Posterior vena cava (tissue), 2 donors: ENCODE measurements at regions of chr2 and their contacts with region 1.

Region 1: DNA sequence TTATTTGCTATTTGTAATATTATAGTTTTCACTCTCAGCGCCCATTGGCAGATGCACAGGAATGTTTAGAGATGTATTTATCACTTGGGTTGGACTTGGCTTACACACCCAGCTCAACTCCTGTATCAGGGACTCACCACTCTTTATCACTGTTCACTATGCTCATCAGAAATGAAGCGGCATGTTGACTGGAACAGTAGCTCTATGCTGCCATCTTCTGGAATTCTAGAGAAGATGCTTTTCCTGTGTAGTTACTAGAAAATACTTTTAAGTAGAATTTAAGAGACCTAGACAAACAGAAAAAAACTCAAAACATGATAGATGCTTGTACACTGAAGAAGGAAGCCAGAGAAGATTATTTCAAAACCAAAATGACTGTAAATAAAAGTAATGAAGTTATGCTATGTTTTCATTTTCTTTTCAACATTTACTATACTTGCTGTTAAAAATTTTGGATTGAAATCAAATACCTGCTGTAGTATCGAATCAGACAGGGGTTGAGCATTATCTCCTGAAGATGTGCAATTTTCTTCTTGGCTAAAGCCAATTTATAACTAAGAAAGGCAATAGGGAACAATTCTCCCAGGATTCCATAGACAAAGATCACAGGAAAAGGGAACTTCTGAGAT is 47.4 kb upstream of the NXPH2 start:
- DNase-seq: no peak

Region 2: GRCh38 chr2:137900421-137901141 is 927.0 kb before region 1 on chr2:
- intact Hi-C with region 1: loop called (anchors 5 to 10 kb)
- DNase-seq: no peak

Region 3: GRCh38 chr2:137910641-137911040 is 916.9 kb before region 1 on chr2:
- intact Hi-C with region 1: loop called (anchors 5 to 10 kb)
- DNase-seq: no peak